ENCODE measurements at regions of chr11 and their contacts with region 1.

Region 1: GRCh38 chr11:119673759-119674336 is 55.2 kb downstream of the NECTIN1 start:
- DNase-seq: peak; percentile 86
- CTCF ChIP-seq: peak; percentile 82

Region 2: GRCh38 chr11:120108154-120108865 is 434.5 kb after region 1 on chr11:
- in situ Hi-C with region 1: loop called (anchors 10 kb)
- DNase-seq: peak; percentile 90
- CTCF ChIP-seq: peak; percentile 100

Measured in GM13977 (cell line).